ENCODE measurements at regions of chr17 and their contacts with region 1.

Region 1: DNA sequence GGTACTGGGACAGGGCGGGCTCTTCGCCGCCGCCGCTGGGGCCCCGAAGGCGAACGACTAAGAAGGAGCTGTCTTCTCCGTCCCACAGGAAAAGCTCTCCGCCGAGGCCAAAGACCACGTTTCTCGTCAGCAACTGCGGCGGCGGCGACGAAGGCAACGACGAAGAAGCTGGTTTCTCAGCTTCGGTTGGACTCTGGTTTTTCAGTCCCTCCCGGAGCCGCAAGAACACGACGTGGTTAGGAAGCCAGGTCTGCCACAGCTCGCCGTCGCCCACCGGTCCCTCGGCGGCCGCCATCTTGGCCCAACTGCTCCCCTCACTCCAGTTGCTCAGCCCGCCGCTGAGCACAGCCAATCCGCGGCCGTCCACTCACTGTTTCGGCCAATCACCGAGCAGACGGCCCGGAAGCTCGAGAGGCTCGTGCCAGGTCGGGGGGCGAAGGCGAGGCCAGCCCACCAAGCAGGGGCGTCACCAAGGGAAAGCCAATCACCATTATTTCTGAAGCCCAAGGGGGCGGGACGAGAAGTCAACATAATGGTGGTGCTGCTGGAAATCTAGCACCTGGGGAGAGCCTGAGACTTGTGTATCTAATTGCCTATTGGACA is at the start of gene NUP88:
- DNase-seq: peak; percentile 97
- ATAC-seq: peak; percentile 98
- H3K4me3 ChIP-seq: peak within 1 kb of the TSS; percentile 87 to 99 (median 91)
- H3K27ac ChIP-seq: peak within 1 kb of the TSS; percentile 85
- H3K4me1 ChIP-seq: peaks cover 51% of the 10 kb centered on the region
- H3K27me3 ChIP-seq: no peaks in the 10 kb centered on the region; a peak in 1 of 5 replicates
- CTCF ChIP-seq: no peak
- EP300 ChIP-seq: no peak
- POLR2A ChIP-seq: peak; percentile 89 to 93
- RAD21 ChIP-seq: no peak
- total RNA-seq, gene NUP88: 130 and 170 TPM in 2 replicates

Region 2: DNA sequence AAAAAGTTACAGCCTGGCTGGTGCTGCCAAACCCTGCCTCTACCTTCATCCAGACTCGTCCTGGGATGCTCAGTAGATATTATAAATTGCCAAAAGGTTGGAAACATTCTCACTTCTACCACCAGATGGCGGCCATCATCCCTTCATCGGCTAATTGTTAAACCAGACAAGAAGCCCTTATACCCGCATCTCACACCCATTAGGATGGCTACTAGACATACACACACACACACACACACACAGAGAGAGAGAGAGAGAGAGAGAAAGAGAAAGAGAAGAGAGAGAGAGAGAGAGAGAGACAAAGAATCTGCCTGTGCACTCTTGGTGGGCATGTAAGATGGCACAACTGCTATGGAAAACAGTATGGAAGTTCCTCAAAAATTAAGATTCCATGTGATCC is 169.8 kb before region 1 on chr17:
- CTCF ChIA-PET with region 1: no interaction called
- POLR2A ChIA-PET with region 1: no interaction called
- in situ Hi-C with region 1: no loop called
- intact Hi-C with region 1: loop called (anchors 1 kb)
- DNase-seq: peak; percentile 71
- ATAC-seq: peak; percentile 76
- H3K4me3 ChIP-seq: no peak overlapping the region
- H3K27ac ChIP-seq: no peak overlapping the region
- H3K4me1 ChIP-seq: peaks cover 25% of the 10 kb centered on the region
- H3K27me3 ChIP-seq: peaks cover 2 to 4% of the 10 kb centered on the region in 2 experiments; a peak in 2 of 5 replicates
- CTCF ChIP-seq: peak; percentile 82
- EP300 ChIP-seq: no peak
- POLR2A ChIP-seq: no peak
- RAD21 ChIP-seq: peak; percentile 43; the same call in 1 of the 2 replicates

Region 3: GRCh38 chr17:5344914-5345313 is 74.5 kb before region 1 on chr17:
- CTCF ChIA-PET with region 1: no interaction called
- POLR2A ChIA-PET with region 1: no interaction called
- in situ Hi-C with region 1: no loop called
- intact Hi-C with region 1: no loop called
- DNase-seq: no peak
- ATAC-seq: no peak
- H3K4me3 ChIP-seq: no peak overlapping the region
- H3K27ac ChIP-seq: no peak overlapping the region
- H3K4me1 ChIP-seq: no peaks in the 10 kb centered on the region
- H3K27me3 ChIP-seq: no peaks in the 10 kb centered on the region
- CTCF ChIP-seq: no peak
- EP300 ChIP-seq: no peak
- POLR2A ChIP-seq: no peak
- RAD21 ChIP-seq: no peak

Region 4: DNA sequence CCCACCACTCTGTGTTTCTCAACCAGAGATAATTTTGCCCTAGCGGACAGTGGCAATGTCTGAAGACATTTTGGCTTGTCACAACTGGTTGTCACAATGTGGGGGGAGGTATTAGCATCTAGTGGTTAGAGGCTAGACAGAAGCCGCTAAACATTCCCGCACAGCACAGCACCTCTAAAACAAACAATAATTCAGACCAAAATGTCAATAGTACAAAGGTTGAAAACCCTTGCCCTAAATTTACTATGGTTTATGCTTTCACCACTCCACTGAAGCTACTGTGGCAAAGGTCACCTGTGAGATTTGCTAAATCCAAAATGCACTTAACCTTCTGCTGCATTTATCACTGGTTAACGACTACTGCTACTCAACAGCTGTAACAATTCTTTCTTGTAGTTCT is 14.1 kb before region 1 on chr17:
- CTCF ChIA-PET with region 1: no interaction called
- POLR2A ChIA-PET with region 1: interaction called, 47 read pairs
- in situ Hi-C with region 1: no loop called
- intact Hi-C with region 1: no loop called
- DNase-seq: peak; percentile 91
- ATAC-seq: peak; percentile 98
- H3K4me3 ChIP-seq: no peak overlapping the region; a peak in 1 of 6 replicates
- H3K27ac ChIP-seq: peak overlapping the region; percentile 62
- H3K4me1 ChIP-seq: peaks cover 35% of the 10 kb centered on the region
- H3K27me3 ChIP-seq: no peaks in the 10 kb centered on the region
- CTCF ChIP-seq: no peak
- EP300 ChIP-seq: peak in 1 of 2 experiments; percentile 78; a peak in 2 of 4 replicates
- POLR2A ChIP-seq: no peak
- RAD21 ChIP-seq: peak; percentile 25; the same call in 1 of the 2 replicates

Region 5: DNA sequence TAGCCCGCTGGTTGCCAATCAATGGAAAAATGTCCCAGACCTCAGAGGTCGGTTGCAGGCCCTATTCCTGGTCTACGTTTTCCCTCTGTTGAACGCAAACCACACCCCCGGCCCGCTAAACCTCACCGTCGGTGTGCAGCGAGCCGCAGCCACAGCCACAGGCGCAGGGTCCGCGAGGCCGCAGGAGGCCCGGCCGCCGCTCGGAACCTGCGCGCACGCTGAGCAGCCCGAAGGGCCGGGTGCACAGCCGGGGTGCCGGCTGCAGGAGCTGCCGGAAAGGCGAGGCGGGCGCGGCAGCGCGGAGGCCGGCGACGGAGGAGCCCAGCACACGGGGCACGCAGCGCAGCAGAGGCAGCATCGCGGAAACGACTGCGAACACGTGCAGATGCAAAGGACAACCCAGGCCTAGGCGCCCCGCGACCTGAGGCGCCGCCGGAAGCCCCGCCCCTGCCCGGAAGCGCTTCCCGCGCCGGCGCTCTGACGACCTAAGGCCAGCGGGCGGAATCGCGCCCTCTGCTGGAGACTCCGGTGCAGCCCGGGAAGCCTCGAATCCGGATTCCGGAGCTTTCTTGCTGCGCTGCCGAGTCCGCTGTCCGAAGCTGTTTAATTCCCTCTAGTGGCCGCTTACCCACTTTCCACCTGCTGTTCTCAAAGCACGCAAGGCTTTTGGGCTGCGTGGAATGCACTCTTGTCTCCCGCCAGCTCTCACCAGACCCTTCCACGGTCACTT is 19.4 kb after region 1 on chr17 and contains the start of gene C1QBP:
- CTCF ChIA-PET with region 1: interaction called, 3 read pairs
- POLR2A ChIA-PET with region 1: interaction called, 30 read pairs
- in situ Hi-C with region 1: no loop called
- intact Hi-C with region 1: no loop called
- DNase-seq: peak; percentile 85
- ATAC-seq: peak; percentile 90
- H3K4me3 ChIP-seq: peak within 1 kb of the TSS; percentile 74 to 90 (median 84)
- H3K27ac ChIP-seq: peak within 1 kb of the TSS; percentile 84
- H3K4me1 ChIP-seq: peaks cover 29% of the 10 kb centered on the region
- H3K27me3 ChIP-seq: no peaks in the 10 kb centered on the region; a peak in 1 of 5 replicates
- CTCF ChIP-seq: peak; percentile 95
- EP300 ChIP-seq: 0 out of 4 replicates have a peak, but pooled peaks of 1 of the 2 experiments have one; percentile 19
- POLR2A ChIP-seq: peak; percentile 84 to 93
- RAD21 ChIP-seq: peak; percentile 94
- total RNA-seq, gene C1QBP: 631 and 680 TPM in 2 replicates

Region 6: GRCh38 chr17:5492970-5493369 is 73.5 kb after region 1 on chr17:
- CTCF ChIA-PET with region 1: no interaction called
- POLR2A ChIA-PET with region 1: no interaction called
- in situ Hi-C with region 1: no loop called
- intact Hi-C with region 1: no loop called
- DNase-seq: no peak
- ATAC-seq: no peak
- H3K4me3 ChIP-seq: no peak overlapping the region
- H3K27ac ChIP-seq: no peak overlapping the region
- H3K4me1 ChIP-seq: peaks cover 4% of the 10 kb centered on the region
- H3K27me3 ChIP-seq: no peaks in the 10 kb centered on the region
- CTCF ChIP-seq: no peak
- EP300 ChIP-seq: no peak
- POLR2A ChIP-seq: no peak
- RAD21 ChIP-seq: no peak

Measured in HepG2 (cell line).